Left cardiac atrium (tissue), 4 donors: ENCODE measurements at regions of chr17 and their contacts with region 1.

Region 1: DNA sequence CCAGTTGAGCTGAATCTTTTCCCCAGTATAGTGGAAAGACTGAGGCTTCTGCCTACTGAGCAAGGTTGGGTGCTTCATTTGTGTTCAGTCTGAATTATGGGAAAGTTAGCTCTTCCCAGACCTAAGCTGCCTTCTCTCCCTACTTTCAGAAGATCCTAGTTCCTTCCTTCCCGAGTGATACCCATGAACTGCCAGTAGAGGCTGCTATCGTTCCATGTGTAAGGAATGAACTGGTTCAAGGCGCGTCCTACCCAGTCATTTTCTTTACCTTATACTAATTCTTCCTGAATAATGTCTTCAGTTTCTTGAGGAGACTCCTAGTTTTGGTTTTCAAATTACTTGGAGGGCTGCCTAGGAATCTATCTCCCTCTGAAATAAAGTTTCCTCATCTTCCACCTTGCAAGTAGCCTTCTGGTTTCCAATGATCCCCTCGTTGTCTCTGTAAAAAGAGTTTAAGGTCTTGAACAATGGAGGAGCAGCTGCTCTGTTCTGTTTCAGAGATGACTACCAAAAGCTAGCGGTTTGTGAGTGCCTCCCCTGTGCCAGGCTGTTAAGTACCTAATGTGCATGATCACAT is 934 bp upstream of the AOC2 start:
- DNase-seq: no peak
- ATAC-seq: peak; percentile 63 to 69

Region 2: DNA sequence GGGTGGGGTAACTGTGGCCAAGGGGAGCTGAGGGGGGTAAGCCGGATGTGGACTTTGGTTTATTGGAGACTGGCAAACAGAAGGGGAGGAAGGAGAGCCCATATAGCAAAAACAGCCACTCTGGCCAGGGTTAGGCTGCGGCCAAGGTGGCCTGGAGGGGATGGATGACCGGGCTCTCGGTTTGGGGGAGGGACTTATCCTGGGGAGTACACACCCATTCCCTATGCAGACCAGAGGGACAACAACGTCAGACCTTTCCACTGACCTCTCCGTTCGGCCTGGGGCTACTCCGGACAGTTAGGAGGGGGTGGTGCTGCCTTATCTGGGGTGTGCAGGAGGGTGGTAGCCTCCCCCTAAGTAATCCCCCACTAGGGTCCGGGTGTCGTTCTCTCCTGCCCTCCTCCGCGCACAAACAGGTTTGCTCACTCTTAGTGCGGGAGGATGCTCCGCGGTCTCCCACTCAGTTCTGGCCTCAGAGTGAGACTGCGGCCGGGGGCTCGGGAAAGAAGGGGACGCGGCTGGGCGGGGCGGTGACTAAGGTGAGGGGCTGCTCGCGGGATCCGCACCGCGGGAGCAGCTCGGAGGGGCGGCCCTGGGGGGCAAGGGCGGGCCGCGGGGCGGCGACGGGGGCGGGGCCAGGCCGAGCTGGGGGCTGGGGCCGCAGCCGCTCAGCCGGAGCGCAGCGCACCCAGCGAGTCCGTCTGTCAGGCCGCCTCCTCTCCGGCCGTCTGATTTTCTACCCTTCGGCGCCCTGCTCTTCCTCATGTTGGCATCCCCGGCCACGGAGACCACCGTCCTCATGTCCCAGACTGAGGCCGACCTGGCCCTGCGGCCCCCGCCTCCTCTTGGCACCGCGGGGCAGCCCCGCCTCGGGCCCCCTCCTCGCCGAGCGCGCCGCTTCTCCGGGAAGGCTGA is 63.3 kb before region 1 on chr17 and contains the start of gene WNK4:
- intact Hi-C with region 1: no loop called
- DNase-seq: no peak
- ATAC-seq: peak; percentile 60 to 62
- total RNA-seq, gene WNK4: not detected

Region 3: GRCh38 chr17:42937712-42938596 is 94.5 kb after region 1 on chr17:
- intact Hi-C with region 1: loop called (anchors 2 to 5 kb)
- DNase-seq: peak; percentile 26
- ATAC-seq: peak; percentile 76 to 84

Region 4: DNA sequence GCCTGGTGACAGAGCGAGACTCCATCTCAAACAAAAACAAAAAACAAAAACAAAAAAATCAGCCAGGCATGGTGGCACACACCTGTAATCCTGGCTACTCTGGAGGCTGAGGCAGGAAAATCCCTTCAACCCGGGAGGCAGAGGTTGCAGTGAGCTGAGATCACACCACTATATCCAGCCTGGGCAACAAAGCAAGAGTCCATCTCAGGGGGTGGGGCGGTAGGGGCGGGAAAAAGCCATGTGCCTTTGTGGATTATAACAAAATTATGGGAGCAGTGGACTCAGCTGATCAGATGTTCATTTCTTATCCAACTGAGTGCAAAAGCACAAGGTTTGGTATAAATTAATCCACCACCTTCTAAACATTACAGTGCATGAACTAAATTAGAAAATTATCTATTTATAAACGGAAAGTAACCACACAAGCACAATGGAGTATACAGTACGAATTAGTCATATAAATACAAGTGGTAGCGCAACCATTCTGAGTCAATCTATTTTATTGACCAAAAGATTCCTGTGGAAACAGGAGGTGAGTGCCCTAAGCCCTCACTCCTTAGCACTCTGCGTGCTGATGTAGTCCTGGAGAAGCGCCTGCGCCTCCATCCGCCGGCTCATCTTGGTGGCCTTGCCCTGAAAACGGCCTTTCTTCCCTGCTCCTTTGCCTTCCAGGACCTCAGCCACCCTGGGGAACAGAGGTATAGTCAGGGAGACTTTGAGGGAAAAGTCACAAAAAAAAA is 106.8 kb after region 1 on chr17:
- intact Hi-C with region 1: no loop called
- DNase-seq: no peak
- ATAC-seq: no peak

Region 5: DNA sequence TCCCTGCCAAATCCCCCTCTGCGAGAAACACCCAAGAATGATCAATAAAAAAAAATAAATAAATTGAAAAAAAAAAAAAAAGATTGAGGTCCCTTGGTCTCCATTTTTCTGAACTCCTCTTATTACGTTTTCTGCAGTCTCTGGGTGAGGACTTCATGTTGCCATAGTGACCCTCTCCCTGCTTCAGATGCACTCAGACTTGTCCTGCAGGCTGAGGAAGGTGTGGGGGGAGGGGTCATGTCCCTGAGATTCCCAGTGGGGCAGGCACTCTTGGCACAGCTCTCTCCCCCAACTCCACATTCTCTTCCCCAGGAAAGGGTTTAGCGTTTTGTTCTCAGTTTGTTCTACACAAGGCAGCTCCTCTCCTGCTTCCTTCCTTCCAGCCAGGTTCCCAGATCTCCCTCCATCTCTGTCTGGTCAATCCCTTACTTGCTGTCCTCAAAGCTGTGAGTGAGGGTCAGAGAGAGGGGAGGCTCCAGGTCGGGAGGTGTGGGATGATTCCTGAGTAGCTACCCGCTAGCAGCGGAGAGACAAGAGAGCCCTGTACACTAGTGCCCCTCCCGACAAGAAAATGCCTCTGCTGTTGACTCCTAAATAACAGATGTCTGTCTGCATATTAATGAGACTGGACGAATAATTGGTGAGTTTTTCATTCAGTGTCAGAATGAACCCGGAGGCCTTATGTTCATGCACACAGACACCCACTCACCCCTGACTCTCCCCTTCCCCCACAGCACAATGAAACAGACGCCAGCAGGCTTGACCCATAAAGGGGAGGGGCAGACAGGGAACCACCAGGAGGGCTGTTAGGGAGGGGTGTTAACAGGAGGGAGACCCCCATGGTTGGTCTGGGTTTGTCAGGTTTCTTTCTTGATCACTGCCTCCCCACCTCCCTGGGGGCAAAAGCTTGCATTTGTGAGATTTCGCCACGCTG is 190.8 kb after region 1 on chr17:
- intact Hi-C with region 1: no loop called
- DNase-seq: no peak
- ATAC-seq: no peak